ENCODE measurements at regions of chr7 and their contacts with region 1.

Region 1: GRCh38 chr7:83976295-83976694 is 218.3 kb downstream of the SEMA3A start:
- DNase-seq: peak; percentile 17
- H3K4me3 ChIP-seq: no peak overlapping the region
- H3K27ac ChIP-seq: no peak overlapping the region
- H3K4me1 ChIP-seq: no peaks in the 10 kb centered on the region
- H3K27me3 ChIP-seq: no peaks in the 10 kb centered on the region
- CTCF ChIP-seq: peak; percentile 59

Region 2: DNA sequence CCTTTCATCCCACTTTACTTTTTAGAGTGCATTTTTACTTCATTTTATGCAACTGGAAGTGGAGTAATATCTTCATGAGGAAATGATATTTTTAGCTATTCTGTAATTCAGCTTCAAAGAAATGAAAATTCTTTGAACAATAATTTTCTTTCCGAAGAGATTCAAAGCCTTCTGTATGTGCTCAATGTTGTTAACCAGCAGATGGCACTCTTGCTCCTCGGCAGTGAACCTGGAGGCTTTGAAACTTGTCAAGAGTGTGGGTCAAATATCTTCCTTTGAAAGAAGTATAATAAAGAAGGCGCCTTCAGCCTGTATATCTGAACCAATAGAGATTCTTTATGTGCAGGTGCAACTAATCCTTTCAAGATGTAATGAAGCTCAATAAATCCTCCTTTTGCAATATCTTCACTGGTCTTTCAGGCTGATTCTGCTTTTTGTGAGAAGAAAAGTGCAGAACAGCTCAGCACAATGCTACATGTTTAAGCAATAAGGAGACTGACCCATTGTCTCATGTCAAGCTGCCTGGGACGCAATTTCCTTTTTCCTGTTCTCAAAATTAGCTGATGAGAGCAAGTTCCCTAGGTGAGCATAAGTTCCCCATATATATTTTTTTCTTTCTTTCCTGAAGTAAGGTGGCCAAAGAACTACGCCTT is 40.1 kb before region 1 on chr7:
- CTCF ChIA-PET with region 1: no interaction called
- dilution Hi-C with region 1: no loop called
- in situ Hi-C with region 1: no loop called
- intact Hi-C with region 1: loop called (anchors 2 kb)
- DNase-seq: peak; percentile 57
- H3K4me3 ChIP-seq: no peak overlapping the region
- H3K27ac ChIP-seq: no peak overlapping the region
- H3K4me1 ChIP-seq: no peaks in the 10 kb centered on the region
- H3K27me3 ChIP-seq: no peaks in the 10 kb centered on the region
- CTCF ChIP-seq: peak; percentile 90 to 96

Region 3: GRCh38 chr7:84188786-84189405 is 212.6 kb after region 1 on chr7:
- CTCF ChIA-PET with region 1: no interaction called
- dilution Hi-C with region 1: no loop called
- in situ Hi-C with region 1: loop called in 1 of 2 experiments (anchors 10 kb)
- intact Hi-C with region 1: loop called (anchors 1 kb)
- DNase-seq: no peak
- H3K4me3 ChIP-seq: no peak overlapping the region
- H3K27ac ChIP-seq: peak overlapping the region; percentile 94
- H3K4me1 ChIP-seq: peaks cover 27% of the 10 kb centered on the region
- H3K27me3 ChIP-seq: no peaks in the 10 kb centered on the region
- CTCF ChIP-seq: peak; percentile 46 to 69

Region 4: DNA sequence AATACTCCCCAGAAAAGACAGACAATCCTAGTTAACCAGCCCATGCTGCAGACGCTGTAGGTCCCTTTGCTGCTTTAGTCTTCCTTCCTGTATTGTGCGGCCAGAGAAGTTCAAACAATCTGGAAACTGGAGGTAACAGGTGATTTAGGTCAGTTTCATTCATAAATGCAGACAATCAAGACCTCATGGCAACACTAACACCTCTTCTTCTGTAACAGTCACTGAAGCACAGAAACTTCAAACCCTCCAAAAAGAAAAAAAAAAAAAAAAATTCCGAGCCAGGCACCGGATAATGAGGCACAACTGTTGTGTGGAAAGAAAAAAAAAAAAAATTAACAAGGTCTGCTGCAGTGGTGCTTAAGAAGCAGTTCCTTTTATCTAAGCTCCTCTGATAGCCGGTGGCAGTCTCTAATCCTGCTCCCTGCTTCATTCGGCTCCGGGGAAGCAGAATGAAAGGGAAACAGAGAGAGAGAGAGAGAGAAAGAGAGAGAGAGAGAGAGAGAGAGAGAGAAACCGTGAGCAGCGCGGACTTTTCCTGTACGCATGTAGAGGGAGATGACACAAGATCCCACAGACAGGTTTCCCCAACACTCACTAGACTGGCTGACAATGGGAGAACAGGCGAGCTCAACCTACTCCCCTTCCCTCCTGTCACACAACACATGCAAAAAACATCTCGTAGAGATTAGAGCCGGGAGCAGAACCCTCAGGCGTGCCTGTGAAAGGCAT is 218.4 kb after region 1 on chr7 and contains the start of gene SEMA3A:
- CTCF ChIA-PET with region 1: no interaction called
- dilution Hi-C with region 1: no loop called
- in situ Hi-C with region 1: loop called in 1 of 2 experiments (anchors 10 kb)
- intact Hi-C with region 1: no loop called
- DNase-seq: peak; percentile 93
- H3K4me3 ChIP-seq: peak within 1 kb of the TSS; percentile 45 to 84 (median 72)
- H3K27ac ChIP-seq: peak within 1 kb of the TSS; percentile 90
- H3K4me1 ChIP-seq: peaks cover 12% of the 10 kb centered on the region
- H3K27me3 ChIP-seq: no peaks in the 10 kb centered on the region
- CTCF ChIP-seq: no peak
- total RNA-seq, gene SEMA3A: 0.83 to 12.8 TPM

Region 5: GRCh38 chr7:84455788-84456187 is 479.5 kb after region 1 on chr7:
- CTCF ChIA-PET with region 1: no interaction called
- dilution Hi-C with region 1: no loop called
- in situ Hi-C with region 1: loop called in 1 of 2 experiments (anchors 25 kb)
- intact Hi-C with region 1: loop called (anchors 2 kb)
- DNase-seq: peak; percentile 1
- H3K4me3 ChIP-seq: no peak overlapping the region
- H3K27ac ChIP-seq: no peak overlapping the region
- H3K4me1 ChIP-seq: no peaks in the 10 kb centered on the region
- H3K27me3 ChIP-seq: no peaks in the 10 kb centered on the region
- CTCF ChIP-seq: no peak